ENCODE measurements at regions of chr11 and their contacts with region 1.

Region 1: DNA sequence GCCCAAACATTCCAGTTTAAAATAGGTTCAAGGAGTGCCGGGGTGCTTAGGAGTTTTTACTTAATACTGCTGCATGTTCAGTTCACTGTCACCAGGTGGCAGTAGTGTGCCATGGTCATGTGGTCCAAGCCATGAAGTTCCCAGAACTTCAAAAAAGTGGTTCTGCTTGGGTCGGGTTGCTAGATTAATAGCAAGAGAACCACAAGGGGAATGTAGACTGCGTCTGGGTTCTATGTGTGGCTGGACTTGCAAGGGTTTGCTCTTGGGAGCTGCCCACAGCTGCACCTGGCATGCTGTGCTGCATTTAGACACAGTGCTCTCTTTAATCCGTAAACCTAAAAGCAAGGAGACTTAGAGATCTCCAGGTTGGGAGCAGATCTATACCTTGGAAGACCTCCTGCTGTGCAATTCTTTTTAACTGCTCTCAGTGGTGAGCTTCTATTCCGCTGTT is 6.5 kb upstream of the SPON1 start:
- DNase-seq: peak in 6 of 10 donors; percentile 25 to 89 (median 59)

Region 2: DNA sequence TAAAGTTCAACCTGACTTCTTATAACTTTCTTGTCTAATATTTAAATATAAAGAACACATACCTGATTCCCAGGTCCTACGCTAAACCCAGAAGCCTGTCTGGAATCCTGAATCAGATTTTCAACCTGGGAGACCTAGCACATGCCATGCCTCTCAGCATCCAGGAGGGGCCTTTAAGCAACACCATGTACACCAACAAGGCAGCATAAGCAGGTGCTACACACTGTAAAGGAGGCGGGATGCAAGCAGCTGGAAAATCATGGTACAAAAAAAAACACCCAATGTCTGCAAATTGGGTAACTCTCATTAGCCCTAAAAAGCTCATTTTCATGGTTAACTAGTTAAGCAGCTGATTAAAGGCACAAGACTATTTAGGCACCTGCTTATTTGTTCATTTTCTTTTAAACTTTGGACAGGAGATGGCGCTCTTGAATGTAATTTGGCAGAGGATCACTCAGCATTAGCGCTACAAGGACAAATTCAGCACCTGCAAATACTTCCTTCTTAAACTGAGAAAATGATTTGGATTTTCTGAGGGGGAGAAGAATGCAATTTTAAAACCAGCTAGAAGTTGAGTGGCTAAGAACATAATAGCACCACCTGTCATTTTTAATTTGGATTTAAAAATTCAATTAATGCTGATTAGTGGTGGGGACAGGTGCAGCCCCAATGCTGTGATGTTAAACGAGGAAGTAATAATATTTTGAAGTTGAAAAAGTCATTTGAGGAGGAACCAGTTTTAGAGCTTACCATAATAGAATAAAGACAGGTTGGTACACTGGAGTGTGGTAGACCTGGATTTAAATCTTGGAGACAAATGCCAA is 183.6 kb before region 1 on chr11:
- intact Hi-C with region 1: loop called (anchors 5 kb)
- DNase-seq: no peak

Region 3: DNA sequence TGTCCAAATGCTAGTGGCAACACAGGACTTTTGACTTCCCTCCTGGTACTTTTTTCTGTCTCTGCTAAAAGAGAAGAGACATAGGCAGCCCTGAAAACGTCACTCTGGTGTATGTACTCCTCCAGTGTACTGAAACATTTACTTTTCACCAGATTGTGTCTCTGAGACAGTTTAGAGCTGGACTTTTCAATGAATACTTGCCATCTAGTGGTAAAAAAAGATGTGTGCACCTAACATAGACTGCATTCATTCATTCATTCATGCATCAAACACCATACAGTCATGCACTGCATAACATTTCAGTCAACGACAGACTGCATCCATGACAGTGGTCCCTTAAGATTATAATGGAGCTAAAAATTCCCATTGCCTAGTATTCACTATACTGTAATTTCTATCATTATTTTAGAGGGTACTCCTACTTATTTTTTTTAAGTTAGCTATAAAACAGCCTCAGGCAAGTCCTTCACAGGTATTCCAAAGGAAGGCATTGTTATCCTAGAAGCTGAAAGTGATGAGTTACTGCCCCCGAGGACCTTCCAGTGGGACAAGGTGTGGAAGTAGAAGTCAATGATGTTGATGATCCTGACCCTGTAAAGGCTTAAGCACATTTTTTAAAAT is 192.8 kb after region 1 on chr11:
- intact Hi-C with region 1: loop called (anchors 1 kb)
- DNase-seq: no peak

Region 4: DNA sequence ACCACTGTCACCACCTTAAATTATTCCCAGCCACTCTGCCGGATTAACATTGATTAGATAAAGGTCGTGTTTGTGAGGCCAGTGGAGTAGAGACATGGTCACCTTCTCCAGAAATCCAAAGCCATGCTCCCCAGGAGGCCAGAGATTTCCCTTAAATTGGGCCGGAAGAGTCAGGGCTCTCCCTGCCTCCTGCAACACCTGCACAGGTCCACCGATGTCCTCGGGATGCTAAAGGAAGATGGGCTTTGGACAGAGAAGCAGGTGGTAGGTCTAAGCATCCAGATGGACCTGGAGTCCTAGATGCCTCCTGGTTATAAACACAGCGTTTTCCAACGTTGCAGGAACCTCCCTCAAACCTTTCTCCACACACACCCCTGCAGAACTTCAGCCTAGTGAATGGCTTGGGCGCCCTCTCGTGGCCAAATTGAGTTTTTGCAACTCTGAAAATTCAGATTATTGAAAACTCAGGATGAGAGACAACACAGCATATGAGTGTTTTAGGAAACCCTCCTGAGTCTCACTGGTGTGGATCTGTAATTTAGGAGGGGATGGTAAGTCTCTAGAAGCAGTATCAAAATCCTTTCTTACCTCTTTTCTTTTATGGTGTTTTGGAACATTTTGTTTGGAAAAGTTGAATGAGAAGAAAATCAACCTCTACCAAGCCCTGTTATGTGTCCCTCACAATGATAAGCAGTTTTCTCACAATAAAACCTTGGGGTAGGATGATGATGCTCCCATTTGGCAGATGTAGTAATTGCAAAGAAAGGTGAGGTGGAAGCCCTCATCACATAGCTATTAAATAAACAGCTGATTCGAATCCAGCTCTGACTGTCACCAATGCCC is 293.3 kb after region 1 on chr11:
- intact Hi-C with region 1: loop called (anchors 1 kb)
- DNase-seq: peak in 8 of 10 donors; percentile 39 to 95 (median 70)